ENCODE measurements at regions of chr7 and their contacts with region 1.

Region 1: GRCh38 chr7:726084-726853 is at the start of gene DNAAF5:
- DNase-seq: peak; percentile 91
- H3K4me3 ChIP-seq: peak within 1 kb of the TSS; percentile 29 to 98 (median 96)
- H3K27ac ChIP-seq: peak within 1 kb of the TSS; percentile 62 to 84 (median 72)
- H3K4me1 ChIP-seq: peaks cover 0 to 27% (median 19%) of the 10 kb centered on the region in 4 donors
- H3K27me3 ChIP-seq: no peaks in the 10 kb centered on the region
- CTCF ChIP-seq: no peak
- EP300 ChIP-seq: no peak
- POLR2A ChIP-seq: no peak
- total RNA-seq, gene DNAAF5: 13.2 to 25.4 (median 16.0) TPM

Region 2: DNA sequence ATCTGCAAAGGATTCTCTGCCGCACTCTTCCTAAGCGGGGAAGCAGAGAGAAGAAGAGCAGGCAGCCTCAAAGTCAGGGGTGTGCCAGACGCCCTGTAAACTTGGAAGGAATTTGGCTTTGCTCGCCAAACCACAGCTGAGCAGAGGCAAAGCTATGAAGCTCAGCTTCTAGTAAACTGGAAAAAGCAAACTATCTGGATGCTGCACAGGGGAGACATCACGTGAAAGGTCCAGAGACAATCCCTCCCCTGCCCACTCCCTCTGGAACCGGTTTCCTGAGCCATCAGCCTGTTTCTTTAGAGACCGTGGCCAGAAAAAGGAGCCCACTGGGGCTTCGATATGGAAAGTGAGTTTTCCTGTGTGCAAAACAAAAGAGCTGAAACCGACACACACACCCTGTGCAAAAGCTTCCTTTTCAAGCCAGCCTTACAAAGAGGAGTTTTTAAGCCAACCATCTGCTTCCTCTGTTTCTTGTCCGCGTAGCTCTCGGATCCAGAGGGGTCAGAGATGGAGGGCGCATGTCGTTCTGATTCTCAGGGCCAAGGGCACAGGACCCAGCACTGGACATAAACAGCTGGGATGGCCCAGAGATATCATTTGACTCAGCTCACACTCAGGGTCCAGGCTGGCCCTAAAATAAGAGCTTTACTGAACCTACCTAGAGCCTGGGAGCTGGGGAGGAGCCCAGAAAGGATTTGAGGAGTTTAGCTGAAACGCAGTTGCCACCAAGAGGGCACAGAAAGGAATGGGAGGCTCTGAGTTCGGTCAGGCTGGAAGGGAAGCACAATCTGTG is 57.9 kb before region 1 on chr7:
- intact Hi-C with region 1: loop called (anchors 5 kb)
- DNase-seq: peak; percentile 89
- H3K4me3 ChIP-seq: peak overlapping the region in 3 of 4 donors; percentile 16 to 28 (median 24)
- H3K27ac ChIP-seq: peak overlapping the region; percentile 78 to 93 (median 82)
- H3K4me1 ChIP-seq: peaks cover 0 to 55% (median 52%) of the 10 kb centered on the region in 4 donors
- H3K27me3 ChIP-seq: no peaks in the 10 kb centered on the region
- CTCF ChIP-seq: no peak
- EP300 ChIP-seq: peak in 1 of 4 donors; percentile 90
- POLR2A ChIP-seq: no peak

Region 3: GRCh38 chr7:750111-750905 is 24.0 kb after region 1 on chr7:
- intact Hi-C with region 1: no loop called
- DNase-seq: peak; percentile 55
- H3K4me3 ChIP-seq: no peak overlapping the region
- H3K27ac ChIP-seq: no peak overlapping the region
- H3K4me1 ChIP-seq: no peaks in the 10 kb centered on the region
- H3K27me3 ChIP-seq: no peaks in the 10 kb centered on the region
- CTCF ChIP-seq: no peak
- EP300 ChIP-seq: no peak
- POLR2A ChIP-seq: no peak

Region 4: GRCh38 chr7:884145-885003 is 158.1 kb after region 1 on chr7:
- intact Hi-C with region 1: no loop called
- DNase-seq: peak; percentile 61
- H3K4me3 ChIP-seq: no peak overlapping the region
- H3K27ac ChIP-seq: peak overlapping the region in 2 of 4 donors; percentile 36 to 43
- H3K4me1 ChIP-seq: peaks cover 0 to 53% (median 39%) of the 10 kb centered on the region in 4 donors
- H3K27me3 ChIP-seq: no peaks in the 10 kb centered on the region
- CTCF ChIP-seq: no peak
- EP300 ChIP-seq: no peak
- POLR2A ChIP-seq: no peak

Measured in sigmoid colon (tissue), 7 donors.